BJ (cell line): ENCODE measurements at regions of chr10 and their contacts with region 1.

Region 1: GRCh38 chr10:70272925-70273316 is 10.9 kb downstream of the NPFFR1 start:
- DNase-seq: no peak
- H3K4me3 ChIP-seq: no peak overlapping the region
- H3K27me3 ChIP-seq: peaks cover 6% of the 10 kb centered on the region
- CTCF ChIP-seq: peak; percentile 41; the same call in 1 of the 2 replicates

Region 2: GRCh38 chr10:70052462-70053217 is 220.3 kb before region 1 on chr10 and contains the start of gene MACROH2A2:
- CTCF ChIA-PET with region 1: no interaction called
- POLR2A ChIA-PET with region 1: no interaction called
- DNase-seq: peak; percentile 21
- H3K4me3 ChIP-seq: peak within 1 kb of the TSS; percentile 54
- H3K27me3 ChIP-seq: peaks cover 21% of the 10 kb centered on the region
- CTCF ChIP-seq: peak; percentile 47
- polyA plus RNA-seq, gene MACROH2A2: 2.7 TPM in 2 replicates

Region 3: GRCh38 chr10:70283445-70284399 is 10.8 kb after region 1 on chr10 and contains the start of gene NPFFR1:
- CTCF ChIA-PET with region 1: interaction called, 19 read pairs
- POLR2A ChIA-PET with region 1: no interaction called
- DNase-seq: no peak
- H3K4me3 ChIP-seq: no peak within 1 kb of the TSS
- H3K27me3 ChIP-seq: peaks cover 31% of the 10 kb centered on the region
- CTCF ChIP-seq: no peak
- polyA plus RNA-seq, gene NPFFR1: not detected in 2 replicates

Region 4: GRCh38 chr10:70321897-70322890 is 49.3 kb after region 1 on chr10:
- CTCF ChIA-PET with region 1: no interaction called
- POLR2A ChIA-PET with region 1: no interaction called
- DNase-seq: no peak
- H3K4me3 ChIP-seq: no peak overlapping the region
- H3K27me3 ChIP-seq: no peaks in the 10 kb centered on the region
- CTCF ChIP-seq: no peak

Region 5: GRCh38 chr10:70355051-70356021 is 82.4 kb after region 1 on chr10:
- CTCF ChIA-PET with region 1: interaction called, 11 read pairs
- POLR2A ChIA-PET with region 1: no interaction called
- DNase-seq: no peak
- H3K4me3 ChIP-seq: no peak overlapping the region
- H3K27me3 ChIP-seq: no peaks in the 10 kb centered on the region
- CTCF ChIP-seq: no peak